Thyroid gland (tissue), 4 donors: ENCODE measurements at regions of chr17 and their contacts with region 1.

Region 1: GRCh38 chr17:55295411-55296170 is 30.8 kb downstream of the HLF start:
- DNase-seq: peak; percentile 62 to 73
- H3K4me3 ChIP-seq: no peak overlapping the region
- H3K27ac ChIP-seq: no peak overlapping the region
- H3K4me1 ChIP-seq: peaks cover 5 to 7% of the 10 kb centered on the region in 2 donors
- H3K27me3 ChIP-seq: no peaks in the 10 kb centered on the region
- CTCF ChIP-seq: peak; percentile 71 to 91 (median 84)
- POLR2A ChIP-seq: no peak

Region 2: DNA sequence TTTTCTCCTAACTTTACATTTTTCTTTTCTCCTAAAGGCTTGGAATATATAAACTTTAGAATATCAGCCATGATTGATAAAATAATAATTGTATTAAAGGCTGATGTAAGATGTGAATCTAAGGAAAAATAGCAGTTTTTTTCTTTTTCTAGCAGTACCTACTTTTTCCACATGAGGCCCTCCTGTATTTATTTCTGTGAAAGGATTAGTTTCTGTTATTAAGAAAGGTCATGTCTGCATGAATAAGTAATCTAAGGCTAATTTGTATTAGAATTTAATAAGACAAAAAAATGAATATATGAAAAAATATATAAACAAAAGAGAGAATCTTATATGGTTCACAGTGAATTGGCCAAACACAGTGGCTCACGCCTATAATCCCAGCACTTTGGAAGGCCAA is 241.7 kb before region 1 on chr17:
- intact Hi-C with region 1: loop called (anchors 10 kb)
- DNase-seq: no peak
- H3K4me3 ChIP-seq: no peak overlapping the region
- H3K27ac ChIP-seq: no peak overlapping the region
- H3K4me1 ChIP-seq: peaks cover 8 to 13% of the 10 kb centered on the region in 2 donors
- H3K27me3 ChIP-seq: no peaks in the 10 kb centered on the region
- CTCF ChIP-seq: peak in 5 of 6 experiments; percentile 12 to 75 (median 63)
- POLR2A ChIP-seq: no peak

Region 3: GRCh38 chr17:55242476-55242875 is 53.1 kb before region 1 on chr17:
- intact Hi-C with region 1: loop called (anchors 10 kb)
- DNase-seq: no peak
- H3K4me3 ChIP-seq: no peak overlapping the region
- H3K27ac ChIP-seq: no peak overlapping the region
- H3K4me1 ChIP-seq: peaks cover 10% of the 10 kb centered on the region in 2 donors
- H3K27me3 ChIP-seq: no peaks in the 10 kb centered on the region
- CTCF ChIP-seq: no peak
- POLR2A ChIP-seq: no peak